ENCODE measurements at regions of chr4 and their contacts with region 1.

Region 1: DNA sequence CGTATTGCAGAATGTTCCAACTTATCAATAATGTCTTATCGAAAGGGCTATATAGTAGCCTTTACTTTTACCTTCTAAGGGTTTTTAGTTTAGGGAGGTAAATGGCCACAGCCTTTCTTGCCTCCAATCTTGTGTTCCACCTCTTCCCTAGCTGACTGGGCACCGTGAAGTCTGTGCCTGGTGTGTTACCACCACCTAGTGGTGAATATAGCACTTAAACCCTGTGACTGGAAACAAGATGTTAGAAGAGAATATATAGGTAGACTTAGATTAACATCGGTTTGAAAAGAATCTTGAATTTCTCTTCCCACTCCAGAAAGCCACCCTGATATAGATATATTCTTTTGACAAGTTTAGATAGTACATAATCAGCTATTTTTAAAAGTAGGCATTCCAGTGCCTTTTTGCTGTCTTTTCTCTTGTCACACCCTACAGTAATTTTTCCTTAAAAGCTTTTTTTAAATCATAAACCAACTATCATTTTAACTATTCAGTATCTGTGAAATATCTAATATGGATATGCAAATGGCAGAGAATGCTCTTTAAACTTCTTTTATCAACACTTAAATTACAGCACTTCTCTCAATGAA is 27.8 kb upstream of the ADH7 start:
- DNase-seq: peak; percentile 59
- ATAC-seq: peak; percentile 39
- H3K4me3 ChIP-seq: no peak overlapping the region
- H3K4me3 Mint-ChIP-seq: no peak overlapping the region
- H3K27ac ChIP-seq: no peak overlapping the region
- H3K27ac Mint-ChIP-seq: no peak overlapping the region
- H3K4me1 ChIP-seq: no peaks in the 10 kb centered on the region
- H3K4me1 Mint-ChIP-seq: no peaks in the 10 kb centered on the region
- H3K27me3 ChIP-seq: peaks cover 0 to 9% (median 0%) of the 10 kb centered on the region in 4 experiments
- H3K27me3 Mint-ChIP-seq: peaks cover 37% of the 10 kb centered on the region
- CTCF ChIP-seq: peak; percentile 84

Region 2: GRCh38 chr4:99117876-99118693 is 344.9 kb before region 1 on chr4:
- CTCF ChIA-PET with region 1: no interaction called
- POLR2A ChIA-PET with region 1: no interaction called
- intact Hi-C with region 1: loop called (anchors 2 kb)
- DNase-seq: peak; percentile 11
- ATAC-seq: no peak
- H3K4me3 ChIP-seq: no peak overlapping the region
- H3K4me3 Mint-ChIP-seq: no peak overlapping the region
- H3K27ac ChIP-seq: no peak overlapping the region
- H3K27ac Mint-ChIP-seq: no peak overlapping the region
- H3K4me1 ChIP-seq: no peaks in the 10 kb centered on the region
- H3K4me1 Mint-ChIP-seq: no peaks in the 10 kb centered on the region
- H3K27me3 ChIP-seq: peaks cover 0 to 3% (median 0%) of the 10 kb centered on the region in 4 experiments
- H3K27me3 Mint-ChIP-seq: peaks cover 4% of the 10 kb centered on the region
- CTCF ChIP-seq: peak; percentile 41

Region 3: DNA sequence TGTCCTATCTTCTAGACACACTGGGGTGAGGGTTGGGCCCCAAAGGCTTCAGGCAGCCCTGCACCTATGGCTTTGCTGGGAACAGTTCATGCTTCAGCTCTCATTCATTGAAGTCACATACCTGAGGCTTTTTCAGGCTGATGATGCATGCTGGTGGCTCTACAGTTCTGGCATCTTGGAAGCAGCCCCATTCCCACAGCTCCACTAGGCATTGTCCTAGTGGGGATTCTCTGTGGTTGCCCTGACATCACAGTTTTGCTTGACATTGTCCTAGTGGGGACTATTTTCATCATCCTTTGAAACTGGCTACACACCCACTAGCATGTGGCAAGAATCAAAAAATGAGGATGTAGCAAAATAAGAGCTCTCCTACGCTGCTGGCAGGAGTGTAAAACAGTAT is 10.2 kb after region 1 on chr4:
- CTCF ChIA-PET with region 1: interaction called, 11 read pairs
- POLR2A ChIA-PET with region 1: no interaction called
- intact Hi-C with region 1: no loop called
- DNase-seq: no peak
- ATAC-seq: no peak
- H3K4me3 ChIP-seq: no peak overlapping the region
- H3K4me3 Mint-ChIP-seq: no peak overlapping the region
- H3K27ac ChIP-seq: no peak overlapping the region
- H3K27ac Mint-ChIP-seq: no peak overlapping the region
- H3K4me1 ChIP-seq: no peaks in the 10 kb centered on the region
- H3K4me1 Mint-ChIP-seq: no peaks in the 10 kb centered on the region
- H3K27me3 ChIP-seq: peaks cover 0 to 2% (median 0%) of the 10 kb centered on the region in 4 experiments
- H3K27me3 Mint-ChIP-seq: peaks cover 28% of the 10 kb centered on the region
- CTCF ChIP-seq: no peak

Region 4: DNA sequence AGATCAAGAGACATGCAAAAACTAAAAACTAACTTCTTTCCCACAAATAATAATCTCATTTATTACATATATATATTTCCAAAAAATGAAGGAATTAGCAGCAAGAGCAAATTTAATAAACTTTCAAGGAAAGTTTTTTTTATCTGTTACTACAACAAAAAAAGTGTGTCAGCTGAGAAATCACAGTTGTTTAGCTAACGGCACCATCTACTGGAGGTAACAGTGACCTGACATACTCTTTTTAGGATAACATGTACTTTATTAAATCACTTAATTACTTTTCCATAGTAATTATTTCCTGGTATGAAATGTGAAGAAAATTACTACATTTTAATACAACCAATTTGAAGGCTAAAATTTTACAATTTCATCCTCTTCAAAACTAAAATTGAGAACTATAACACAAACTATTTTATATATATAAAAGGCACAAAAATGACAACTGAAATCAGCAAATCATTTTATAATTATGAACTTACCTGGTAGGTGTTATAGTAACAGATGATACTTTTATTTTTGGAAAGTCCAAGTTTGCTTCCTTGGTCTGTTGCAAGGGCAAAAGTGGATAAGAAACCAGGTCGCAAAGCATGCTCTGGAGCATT is 422.2 kb after region 1 on chr4:
- CTCF ChIA-PET with region 1: no interaction called
- POLR2A ChIA-PET with region 1: no interaction called
- intact Hi-C with region 1: loop called (anchors 10 kb)
- DNase-seq: peak; percentile 68
- ATAC-seq: no peak
- H3K4me3 ChIP-seq: no peak overlapping the region
- H3K4me3 Mint-ChIP-seq: no peak overlapping the region
- H3K27ac ChIP-seq: no peak overlapping the region
- H3K27ac Mint-ChIP-seq: no peak overlapping the region
- H3K4me1 ChIP-seq: no peaks in the 10 kb centered on the region
- H3K4me1 Mint-ChIP-seq: peaks cover 2% of the 10 kb centered on the region
- H3K27me3 ChIP-seq: no peaks in the 10 kb centered on the region
- H3K27me3 Mint-ChIP-seq: no peaks in the 10 kb centered on the region
- CTCF ChIP-seq: peak; percentile 81